Pancreas (tissue), 10 donors: ENCODE measurements at regions of chr6 and their contacts with region 1.

Region 1: GRCh38 chr6:80094017-80094416 is 12.5 kb upstream of the BCKDHB start:
- DNase-seq: no peak
- ATAC-seq: peak in 3 of 4 donors; percentile 55 to 62 (median 56)
- H3K4me3 ChIP-seq: no peak overlapping the region
- H3K27ac ChIP-seq: no peak overlapping the region
- H3K4me1 ChIP-seq: no peaks in the 10 kb centered on the region
- H3K27me3 ChIP-seq: no peaks in the 10 kb centered on the region
- CTCF ChIP-seq: peak in 3 of 4 donors; percentile 23 to 44 (median 36)

Region 2: GRCh38 chr6:79949233-79949632 is 144.8 kb before region 1 on chr6:
- intact Hi-C with region 1: loop called in 1 of 3 experiments (anchors 10 kb)
- DNase-seq: peak in 4 of 6 donors; percentile 28 to 48 (median 38)
- ATAC-seq: peak; percentile 53 to 73 (median 59)
- H3K4me3 ChIP-seq: no peak overlapping the region
- H3K27ac ChIP-seq: no peak overlapping the region
- H3K4me1 ChIP-seq: peaks cover 0 to 9% (median 6%) of the 10 kb centered on the region in 3 donors
- H3K27me3 ChIP-seq: peaks cover 0 to 4% (median 0%) of the 10 kb centered on the region in 4 donors
- CTCF ChIP-seq: peak in 2 of 4 donors; percentile 25 to 30